Activated CD8-positive, alpha-beta memory T cell treated with anti-CD3 and anti-CD28 coated beads, Interleukin-2, amount 10 ng/mL, durations not matched to agents 7 days and 5 days (primary cell): ENCODE measurements at regions of chr4 and their contacts with region 1.

Region 1: DNA sequence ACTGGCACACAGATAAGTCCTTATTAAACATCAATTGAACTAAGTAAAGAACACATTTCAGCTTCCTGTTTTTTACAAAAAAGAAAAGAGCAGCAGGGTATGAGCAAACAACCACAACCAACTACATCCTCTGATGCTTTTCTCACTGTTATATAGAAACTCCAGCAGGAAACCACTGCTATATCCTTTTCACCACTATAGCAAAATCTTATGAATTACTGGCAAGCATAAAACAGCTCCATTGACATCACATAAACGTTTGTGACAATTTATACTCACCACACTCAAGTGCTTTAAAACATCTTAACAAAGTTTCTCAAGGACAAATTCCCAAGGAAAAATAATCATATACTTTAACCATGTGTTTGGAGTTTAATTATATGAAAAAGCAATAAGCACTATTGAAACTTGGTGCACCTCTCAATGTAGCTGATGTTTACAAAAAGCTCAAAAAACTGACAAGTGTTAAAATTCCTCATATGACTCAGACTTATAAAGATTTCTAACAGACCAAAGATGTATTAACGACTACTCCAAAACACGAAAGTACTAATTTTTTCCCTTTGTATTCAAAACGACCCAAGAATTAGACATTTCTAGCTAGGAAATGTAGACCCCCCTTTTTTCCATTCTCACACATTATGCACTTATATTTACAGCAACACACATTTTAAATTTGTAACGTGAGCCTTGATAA is 12.9 kb downstream of the GPRIN3 start:
- DNase-seq: no peak
- ATAC-seq: peak; percentile 62
- H3K4me3 Mint-ChIP-seq: peak overlapping the region; percentile 68
- H3K27ac Mint-ChIP-seq: peak overlapping the region; percentile 99
- H3K4me1 Mint-ChIP-seq: peaks cover 84% of the 10 kb centered on the region
- H3K27me3 Mint-ChIP-seq: no peaks in the 10 kb centered on the region

Region 2: DNA sequence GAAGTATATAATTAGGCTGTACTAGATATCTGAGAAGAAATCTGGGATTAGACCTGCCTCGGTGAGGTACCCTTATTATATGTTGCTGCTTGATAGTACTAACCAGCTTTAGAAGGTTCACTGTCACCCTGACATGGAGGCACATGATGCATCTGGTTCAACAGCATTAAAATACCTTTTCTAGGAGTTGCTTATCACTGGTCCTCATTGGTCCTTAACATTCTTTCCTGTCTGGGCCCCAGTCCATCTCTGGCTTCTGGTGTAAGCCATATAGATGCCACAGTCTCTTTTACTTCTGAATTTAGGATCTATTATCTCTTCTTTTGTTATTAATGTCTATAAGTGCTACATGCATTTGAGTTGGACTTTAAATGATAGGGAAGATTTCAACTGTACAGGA is 27.3 kb before region 1 on chr4:
- CTCF ChIA-PET with region 1: no interaction called
- DNase-seq: no peak
- ATAC-seq: no peak
- H3K4me3 Mint-ChIP-seq: no peak overlapping the region
- H3K27ac Mint-ChIP-seq: no peak overlapping the region
- H3K4me1 Mint-ChIP-seq: peaks cover 53% of the 10 kb centered on the region
- H3K27me3 Mint-ChIP-seq: no peaks in the 10 kb centered on the region

Region 3: DNA sequence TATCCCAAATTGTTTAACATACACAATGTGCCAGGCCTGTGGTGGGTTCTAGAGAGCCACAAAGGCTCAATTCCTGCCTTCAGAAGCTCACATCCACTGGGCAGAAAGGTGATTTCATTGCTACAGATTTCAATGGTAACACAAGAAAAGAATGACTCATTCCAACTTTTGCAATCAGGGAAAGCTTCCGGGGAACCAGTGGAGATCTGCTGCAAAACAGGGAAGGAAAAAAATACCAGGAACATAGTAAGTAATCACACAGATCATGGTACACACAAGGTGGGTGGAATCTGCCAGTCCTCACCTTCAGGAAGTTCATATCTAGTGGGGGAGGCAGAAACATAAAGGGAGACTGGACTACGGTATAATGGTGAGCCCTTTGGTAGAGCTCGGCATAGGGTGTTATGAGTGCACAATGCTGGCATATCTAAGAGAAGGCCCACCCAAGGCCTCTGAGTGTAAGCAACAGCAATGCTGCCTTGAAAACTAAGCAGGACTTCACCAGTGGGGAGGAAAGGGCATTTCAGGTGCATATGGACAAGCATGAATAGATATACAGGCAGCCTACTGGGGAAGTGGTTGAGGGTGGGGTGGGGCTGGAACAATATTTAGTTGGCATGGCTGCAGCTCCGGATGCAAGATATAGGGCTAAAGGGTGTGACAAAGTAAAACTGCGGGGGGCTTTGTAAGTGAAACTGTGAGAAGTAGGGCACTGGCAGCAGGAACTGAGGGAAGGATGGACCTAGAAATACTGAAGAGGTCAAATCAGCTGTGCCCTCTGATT is 11.3 kb before region 1 on chr4:
- CTCF ChIA-PET with region 1: interaction called, 49 read pairs
- DNase-seq: peak; percentile 84
- ATAC-seq: peak; percentile 76
- H3K4me3 Mint-ChIP-seq: peak overlapping the region; percentile 64
- H3K27ac Mint-ChIP-seq: peak overlapping the region; percentile 91
- H3K4me1 Mint-ChIP-seq: peaks cover 65% of the 10 kb centered on the region
- H3K27me3 Mint-ChIP-seq: no peaks in the 10 kb centered on the region

Region 4: GRCh38 chr4:89305712-89306437 is 11.2 kb after region 1 on chr4:
- CTCF ChIA-PET with region 1: interaction called, 49 read pairs
- DNase-seq: peak; percentile 71
- ATAC-seq: peak; percentile 30
- H3K4me3 Mint-ChIP-seq: peak overlapping the region; percentile 95
- H3K27ac Mint-ChIP-seq: peak overlapping the region; percentile 96
- H3K4me1 Mint-ChIP-seq: peaks cover 47% of the 10 kb centered on the region
- H3K27me3 Mint-ChIP-seq: no peaks in the 10 kb centered on the region

Region 5: GRCh38 chr4:89312066-89312465 is 17.3 kb after region 1 on chr4:
- CTCF ChIA-PET with region 1: interaction called, 12 read pairs
- DNase-seq: no peak
- ATAC-seq: no peak
- H3K4me3 Mint-ChIP-seq: no peak overlapping the region
- H3K27ac Mint-ChIP-seq: no peak overlapping the region
- H3K4me1 Mint-ChIP-seq: peaks cover 34% of the 10 kb centered on the region
- H3K27me3 Mint-ChIP-seq: no peaks in the 10 kb centered on the region